Testis (tissue), 5 donors: ENCODE measurements at regions of chr11 and their contacts with region 1.

Region 1: GRCh38 chr11:114159802-114160632 is 100.5 kb downstream of the ZBTB16 start:
- DNase-seq: peak; percentile 98
- H3K4me3 ChIP-seq: no peak overlapping the region
- H3K27ac ChIP-seq: peak overlapping the region; percentile 98 to 99
- H3K4me1 ChIP-seq: peaks cover 71% of the 10 kb centered on the region
- H3K27me3 ChIP-seq: no peaks in the 10 kb centered on the region
- CTCF ChIP-seq: peak in 1 of 3 experiments; percentile 9
- POLR2A ChIP-seq: peak; percentile 15

Region 2: DNA sequence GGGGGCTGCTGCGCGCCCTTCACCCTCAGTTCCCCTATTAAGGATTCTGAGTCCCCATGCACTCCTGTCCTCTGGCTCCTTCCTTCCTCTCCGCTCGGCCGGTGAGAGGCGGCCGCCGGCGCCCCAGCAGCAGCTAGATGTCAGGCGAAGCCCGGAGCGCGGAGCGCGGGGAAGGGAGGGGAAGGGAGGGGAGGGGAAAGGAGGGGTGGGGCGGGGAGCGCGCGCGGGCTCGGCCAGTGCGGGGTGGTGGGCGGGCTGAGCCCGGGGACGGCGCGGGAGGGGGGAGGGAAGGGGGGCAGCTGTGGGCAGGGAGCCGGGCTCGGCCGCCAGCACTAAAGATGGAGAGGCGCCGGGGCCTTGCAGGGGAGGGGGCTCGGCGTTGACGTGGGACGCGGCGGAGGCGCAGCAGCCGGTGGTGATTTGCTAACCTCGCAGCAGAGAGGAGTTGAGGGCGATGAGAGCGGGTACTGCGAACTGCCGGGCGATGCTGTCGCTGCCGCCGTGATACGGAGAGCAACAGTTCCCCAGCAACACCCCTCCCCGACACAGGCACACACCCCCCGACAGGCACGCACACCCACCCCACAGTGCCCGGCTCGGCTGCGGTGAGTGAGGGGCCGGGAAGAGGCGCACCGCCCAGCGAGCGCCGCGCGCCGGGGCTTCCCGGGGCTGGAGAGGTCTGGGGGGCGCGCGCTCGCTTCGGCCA is 100.6 kb before region 1 on chr11 and contains the start of gene ZBTB16:
- intact Hi-C with region 1: loop called (anchors 5 kb)
- DNase-seq: peak; percentile 82
- H3K4me3 ChIP-seq: peak within 1 kb of the TSS; percentile 90 to 96
- H3K27ac ChIP-seq: peak within 1 kb of the TSS; percentile 92 to 99
- H3K4me1 ChIP-seq: peaks cover 22% of the 10 kb centered on the region
- H3K27me3 ChIP-seq: no peaks in the 10 kb centered on the region
- CTCF ChIP-seq: peak in 1 of 3 experiments; percentile 28
- POLR2A ChIP-seq: peak; percentile 34
- total RNA-seq, gene ZBTB16: 51.5 to 88.5 TPM

Region 3: GRCh38 chr11:114586797-114587196 is 426.8 kb after region 1 on chr11:
- intact Hi-C with region 1: no loop called
- DNase-seq: no peak
- H3K4me3 ChIP-seq: no peak overlapping the region
- H3K27ac ChIP-seq: no peak overlapping the region
- H3K4me1 ChIP-seq: no peaks in the 10 kb centered on the region
- H3K27me3 ChIP-seq: no peaks in the 10 kb centered on the region
- CTCF ChIP-seq: no peak
- POLR2A ChIP-seq: no peak